ENCODE measurements at regions of chr3 and their contacts with region 1.

Region 1: DNA sequence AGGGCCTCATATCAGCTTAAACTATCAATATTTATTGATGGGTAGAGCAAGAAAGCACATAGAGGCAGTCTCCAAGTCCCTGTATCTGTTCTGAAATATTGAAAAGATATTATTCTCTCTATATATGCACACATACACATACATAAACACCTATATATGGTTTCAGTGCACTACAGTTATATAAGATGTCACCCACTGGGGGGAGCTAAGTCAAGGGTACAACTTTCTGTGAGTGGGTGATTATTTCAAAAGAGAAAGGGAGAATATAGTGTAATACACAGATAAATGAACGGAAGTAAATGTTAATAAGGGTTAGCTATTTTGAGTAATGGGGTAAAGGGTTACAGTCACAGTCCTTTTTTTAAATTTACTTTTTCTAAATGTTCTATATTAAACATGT is 8.8 kb downstream of the SNTN start:
- DNase-seq: no peak
- H3K4me3 ChIP-seq: no peak overlapping the region
- H3K27ac ChIP-seq: no peak overlapping the region
- H3K4me1 ChIP-seq: peaks cover 0 to 3% (median 0%) of the 10 kb centered on the region in 4 experiments; a peak in 1 of 7 replicates
- H3K27me3 ChIP-seq: no peaks in the 10 kb centered on the region
- CTCF ChIP-seq: peak in 2 of 3 experiments; percentile 5 to 23; a peak in 2 of 4 replicates
- EP300 ChIP-seq: no peak
- POLR2A ChIP-seq: no peak
- RAD21 ChIP-seq: peak in 1 of 2 experiments; percentile 17; a peak in 2 of 4 replicates

Region 2: DNA sequence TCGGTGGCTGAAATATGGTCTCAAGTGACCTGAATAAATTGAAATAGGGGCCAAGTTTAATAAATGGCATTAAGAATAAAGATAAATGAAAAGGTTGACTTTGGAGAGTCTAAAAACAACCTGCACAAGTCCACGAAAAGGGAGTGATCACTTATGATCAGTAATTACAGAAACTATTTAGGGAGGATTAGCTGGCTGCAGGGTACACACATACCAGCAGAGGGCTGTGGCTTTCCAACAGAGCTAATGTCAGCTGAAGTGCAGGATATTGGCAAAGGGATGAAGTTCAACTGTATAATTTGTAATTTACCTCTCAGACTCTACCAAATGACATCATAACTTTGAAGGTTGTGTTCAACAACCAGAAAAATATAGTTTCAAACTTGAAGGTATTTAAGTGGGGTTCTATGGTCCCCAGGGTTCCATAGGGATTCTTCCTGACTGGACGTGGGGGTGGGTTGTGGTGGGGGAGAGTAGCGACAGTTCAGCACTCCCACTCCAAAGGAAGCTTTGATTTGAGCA is 296.3 kb before region 1 on chr3:
- CTCF ChIA-PET with region 1: interaction called, 24 read pairs
- POLR2A ChIA-PET with region 1: no interaction called
- DNase-seq: no peak
- H3K4me3 ChIP-seq: no peak overlapping the region
- H3K27ac ChIP-seq: no peak overlapping the region
- H3K4me1 ChIP-seq: no peaks in the 10 kb centered on the region
- H3K27me3 ChIP-seq: no peaks in the 10 kb centered on the region
- CTCF ChIP-seq: peak; percentile 31 to 84 (median 70)
- EP300 ChIP-seq: no peak
- POLR2A ChIP-seq: no peak
- RAD21 ChIP-seq: peak; percentile 72 to 81

Region 3: DNA sequence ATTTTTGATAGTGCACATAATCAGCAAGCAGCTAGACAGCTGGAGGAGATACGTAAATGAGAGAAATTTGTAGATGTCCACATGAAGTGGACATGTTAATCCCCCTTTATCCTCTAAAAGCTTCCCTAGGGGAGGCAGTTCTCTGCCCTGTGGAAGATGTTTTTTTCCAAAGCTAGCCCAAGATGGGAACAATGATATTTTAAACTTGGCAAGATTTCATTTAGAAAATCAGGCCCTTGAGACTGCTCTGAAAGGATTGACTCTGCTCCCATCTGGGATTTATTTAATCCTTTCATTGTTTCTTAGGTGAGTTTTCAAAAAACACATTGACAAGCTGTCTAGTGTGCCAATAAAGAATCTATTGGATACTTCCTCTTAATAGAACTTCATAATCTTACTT is 291.2 kb before region 1 on chr3:
- CTCF ChIA-PET with region 1: interaction called, 24 read pairs
- POLR2A ChIA-PET with region 1: no interaction called
- DNase-seq: no peak
- H3K4me3 ChIP-seq: no peak overlapping the region
- H3K27ac ChIP-seq: no peak overlapping the region
- H3K4me1 ChIP-seq: no peaks in the 10 kb centered on the region
- H3K27me3 ChIP-seq: no peaks in the 10 kb centered on the region
- CTCF ChIP-seq: no peak
- EP300 ChIP-seq: no peak
- POLR2A ChIP-seq: no peak
- RAD21 ChIP-seq: no peak

Region 4: GRCh38 chr3:63617391-63617790 is 43.9 kb before region 1 on chr3:
- CTCF ChIA-PET with region 1: interaction called, 16 read pairs
- POLR2A ChIA-PET with region 1: no interaction called
- DNase-seq: no peak
- H3K4me3 ChIP-seq: no peak overlapping the region
- H3K27ac ChIP-seq: no peak overlapping the region
- H3K4me1 ChIP-seq: peaks cover 0 to 4% (median under 1%) of the 10 kb centered on the region in 4 experiments; a peak in 1 of 7 replicates
- H3K27me3 ChIP-seq: no peaks in the 10 kb centered on the region
- CTCF ChIP-seq: no peak
- EP300 ChIP-seq: no peak
- POLR2A ChIP-seq: no peak
- RAD21 ChIP-seq: no peak

Region 5: DNA sequence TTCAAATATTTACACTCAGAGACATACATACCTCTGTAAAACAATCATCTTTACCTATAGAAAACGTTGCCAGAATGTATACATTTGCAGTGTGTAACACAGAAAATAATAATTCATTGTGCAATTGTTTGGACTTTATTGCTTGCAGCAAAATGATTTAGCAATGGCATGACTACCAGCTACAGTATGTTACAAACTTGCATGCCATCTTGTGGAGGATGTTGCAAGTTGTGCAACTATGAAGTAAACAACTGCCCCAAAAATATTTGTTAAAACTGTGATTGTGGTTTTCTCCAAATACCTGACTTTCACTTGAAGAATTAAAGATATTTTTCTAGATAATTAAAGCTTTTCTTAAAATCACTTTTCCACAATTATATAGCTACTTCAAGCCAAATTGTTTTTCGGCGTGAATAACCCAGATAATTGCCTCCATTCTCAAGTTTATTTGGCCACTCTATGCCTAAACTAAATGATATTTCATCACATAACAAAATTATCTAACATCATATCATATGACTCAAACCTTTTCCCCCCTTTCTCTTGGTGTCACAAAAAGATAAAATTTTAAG is 130.8 kb after region 1 on chr3:
- CTCF ChIA-PET with region 1: interaction called, 18 read pairs
- POLR2A ChIA-PET with region 1: no interaction called
- DNase-seq: no peak
- H3K4me3 ChIP-seq: no peak overlapping the region
- H3K27ac ChIP-seq: no peak overlapping the region
- H3K4me1 ChIP-seq: peaks cover 0 to 7% (median 0%) of the 10 kb centered on the region in 4 experiments; a peak in 2 of 7 replicates
- H3K27me3 ChIP-seq: no peaks in the 10 kb centered on the region
- CTCF ChIP-seq: peak in 2 of 3 experiments; percentile 35 to 36; a peak in 2 of 4 replicates
- EP300 ChIP-seq: no peak
- POLR2A ChIP-seq: no peak
- RAD21 ChIP-seq: peak; percentile 65 to 72; a peak in 3 of 4 replicates

Region 6: DNA sequence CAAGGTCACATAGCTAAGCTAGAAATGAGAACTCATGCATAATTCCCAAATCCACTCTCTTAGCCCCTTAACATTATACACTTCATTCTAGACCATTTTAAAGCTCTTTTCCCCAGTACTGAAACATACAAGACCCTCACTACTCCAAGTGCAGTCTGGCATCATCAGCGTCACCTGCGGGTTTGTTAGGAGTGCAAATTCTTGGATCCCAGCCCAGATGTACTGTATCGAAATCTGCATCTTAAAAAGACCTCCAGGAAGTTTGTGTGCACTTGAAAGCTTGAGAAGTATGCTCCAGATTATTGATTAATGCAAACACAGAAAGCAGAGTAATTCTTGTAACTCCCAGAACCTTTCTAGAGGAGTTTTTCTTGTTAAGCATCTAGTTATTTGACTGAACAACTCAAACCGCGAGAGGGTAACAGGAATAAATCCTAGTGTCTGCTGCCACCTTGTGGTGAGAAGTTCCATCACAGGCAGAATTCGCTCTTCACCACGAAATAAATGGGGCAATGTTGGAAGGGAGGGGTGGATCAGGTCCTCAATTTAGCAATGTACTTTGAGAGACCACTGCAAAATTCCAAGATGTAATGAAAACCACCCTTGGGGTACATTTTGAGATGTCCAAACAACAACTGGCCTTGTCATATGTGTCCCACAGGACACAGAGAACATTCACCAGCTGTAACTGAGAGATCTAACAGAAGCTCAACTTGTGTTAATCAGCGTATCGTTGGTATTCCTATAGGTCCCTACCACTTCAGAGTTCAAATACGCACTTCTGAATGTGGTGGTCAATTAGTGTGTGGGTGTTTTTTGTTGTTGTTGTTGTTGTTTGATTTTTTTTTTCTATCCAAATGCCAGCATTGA is 157.3 kb after region 1 on chr3:
- CTCF ChIA-PET with region 1: interaction called, 30 read pairs
- POLR2A ChIA-PET with region 1: interaction called, 4 read pairs
- DNase-seq: peak; percentile 23 to 83
- H3K4me3 ChIP-seq: no peak overlapping the region
- H3K27ac ChIP-seq: no peak overlapping the region
- H3K4me1 ChIP-seq: peaks cover 0 to 8% (median 3%) of the 10 kb centered on the region in 4 experiments; a peak in 2 of 7 replicates
- H3K27me3 ChIP-seq: no peaks in the 10 kb centered on the region
- CTCF ChIP-seq: peak; percentile 51 to 85 (median 72)
- EP300 ChIP-seq: no peak
- POLR2A ChIP-seq: no peak
- RAD21 ChIP-seq: peak; percentile 95

Region 7: GRCh38 chr3:63832395-63832794 is 171.1 kb after region 1 on chr3:
- CTCF ChIA-PET with region 1: no interaction called
- POLR2A ChIA-PET with region 1: no interaction called
- DNase-seq: no peak
- H3K4me3 ChIP-seq: no peak overlapping the region
- H3K27ac ChIP-seq: no peak overlapping the region
- H3K4me1 ChIP-seq: no peaks in the 10 kb centered on the region
- H3K27me3 ChIP-seq: no peaks in the 10 kb centered on the region
- CTCF ChIP-seq: no peak
- EP300 ChIP-seq: no peak
- POLR2A ChIP-seq: no peak
- RAD21 ChIP-seq: no peak